ENCODE measurements at regions of chr21 and their contacts with region 1.

Region 1: DNA sequence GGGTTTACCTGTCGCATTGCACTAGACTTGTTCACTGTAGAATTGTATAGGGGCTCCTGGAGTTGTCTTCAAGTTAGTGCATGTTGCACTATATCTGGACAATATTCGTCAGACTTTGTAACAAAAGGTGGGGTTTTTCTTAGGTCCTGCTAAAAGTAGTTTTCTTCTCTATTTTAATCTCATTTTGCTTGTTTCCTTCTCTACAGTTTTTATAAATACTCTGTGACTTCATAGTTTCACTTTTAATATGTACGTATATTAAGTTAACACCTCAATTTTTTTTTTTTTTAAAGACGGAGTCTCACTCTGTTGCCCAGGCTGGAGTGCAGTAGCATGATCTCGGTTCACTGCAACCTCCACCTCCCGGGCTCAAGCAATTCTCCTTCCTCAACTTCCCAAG is 26.5 kb upstream of the MRPS6 start:
- DNase-seq: no peak
- ATAC-seq: peak; percentile 58
- H3K4me3 Mint-ChIP-seq: no peak overlapping the region
- H3K27ac Mint-ChIP-seq: no peak overlapping the region
- H3K4me1 Mint-ChIP-seq: peaks cover 14% of the 10 kb centered on the region
- H3K27me3 Mint-ChIP-seq: no peaks in the 10 kb centered on the region

Region 2: GRCh38 chr21:33894736-33895288 is 152.1 kb before region 1 on chr21:
- CTCF ChIA-PET with region 1: no interaction called
- POLR2A ChIA-PET with region 1: no interaction called
- intact Hi-C with region 1: no loop called
- DNase-seq: peak; percentile 87
- ATAC-seq: peak; percentile 99
- H3K4me3 Mint-ChIP-seq: peak overlapping the region; percentile 41
- H3K27ac Mint-ChIP-seq: peak overlapping the region; percentile 64
- H3K4me1 Mint-ChIP-seq: peaks cover 14% of the 10 kb centered on the region
- H3K27me3 Mint-ChIP-seq: peaks cover 6% of the 10 kb centered on the region

Region 3: GRCh38 chr21:34091607-34092006 is 44.7 kb after region 1 on chr21:
- CTCF ChIA-PET with region 1: no interaction called
- POLR2A ChIA-PET with region 1: no interaction called
- intact Hi-C with region 1: loop called in 1 of 2 experiments (anchors 5 kb)
- DNase-seq: no peak
- ATAC-seq: no peak
- H3K4me3 Mint-ChIP-seq: no peak overlapping the region
- H3K27ac Mint-ChIP-seq: no peak overlapping the region
- H3K4me1 Mint-ChIP-seq: peaks cover 48% of the 10 kb centered on the region
- H3K27me3 Mint-ChIP-seq: no peaks in the 10 kb centered on the region

Region 4: DNA sequence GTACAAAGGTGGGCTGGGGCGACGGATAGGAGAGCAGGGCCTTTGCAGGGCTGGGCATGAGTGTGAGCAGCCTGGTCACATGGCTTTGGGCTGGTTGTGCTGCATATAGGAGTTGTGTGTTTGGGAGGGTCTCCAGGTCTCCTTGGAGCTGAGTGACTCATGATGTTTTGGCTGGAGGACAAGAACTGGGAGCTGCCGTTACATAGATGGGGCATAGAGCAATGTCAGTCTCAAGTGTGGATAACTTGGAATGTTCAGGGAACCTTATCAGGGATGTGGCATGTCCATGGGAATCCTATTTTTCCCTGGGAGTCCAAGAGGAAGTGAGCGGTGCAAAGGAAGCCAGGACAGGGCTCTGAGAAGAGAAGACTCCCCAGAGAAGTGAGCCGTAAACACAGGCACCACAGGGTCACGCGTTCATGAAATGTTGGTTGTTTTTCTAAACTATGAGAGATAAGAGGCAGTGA is 180.5 kb after region 1 on chr21:
- CTCF ChIA-PET with region 1: no interaction called
- POLR2A ChIA-PET with region 1: no interaction called
- intact Hi-C with region 1: no loop called
- DNase-seq: no peak
- ATAC-seq: no peak
- H3K4me3 Mint-ChIP-seq: no peak overlapping the region
- H3K27ac Mint-ChIP-seq: no peak overlapping the region
- H3K4me1 Mint-ChIP-seq: no peaks in the 10 kb centered on the region
- H3K27me3 Mint-ChIP-seq: no peaks in the 10 kb centered on the region

Measured in activated CD4-positive, alpha-beta T cell treated with anti-CD3 and anti-CD28 coated beads for 36 hours (primary cell).